CD8-positive, alpha-beta memory T cell (primary cell): ENCODE measurements at regions of chr1 and their contacts with region 1.

Region 1: GRCh38 chr1:43073490-43074230 is 98.4 kb downstream of the EBNA1BP2 start:
- DNase-seq: peak; percentile 52 to 81 (median 64)
- H3K4me3 ChIP-seq: no peak overlapping the region
- H3K4me3 Mint-ChIP-seq: no peak overlapping the region
- H3K27ac ChIP-seq: no peak overlapping the region
- H3K27ac Mint-ChIP-seq: peak overlapping the region in 2 of 8 donors; percentile 15 to 54
- H3K4me1 ChIP-seq: no peaks in the 10 kb centered on the region
- H3K4me1 Mint-ChIP-seq: peaks cover 5 to 11% (median 5%) of the 10 kb centered on the region in 3 donors
- H3K27me3 ChIP-seq: no peaks in the 10 kb centered on the region
- H3K27me3 Mint-ChIP-seq: no peaks in the 10 kb centered on the region

Region 2: GRCh38 chr1:42777852-42778251 is 295.8 kb before region 1 on chr1:
- CTCF ChIA-PET with region 1: interaction called, 35 read pairs
- POLR2A ChIA-PET with region 1: no interaction called
- DNase-seq: peak in 1 of 5 donors; percentile 15
- H3K4me3 ChIP-seq: no peak overlapping the region
- H3K4me3 Mint-ChIP-seq: no peak overlapping the region
- H3K27ac ChIP-seq: no peak overlapping the region
- H3K27ac Mint-ChIP-seq: peak overlapping the region in 5 of 8 donors; percentile 50 to 77 (median 77)
- H3K4me1 ChIP-seq: no peaks in the 10 kb centered on the region
- H3K4me1 Mint-ChIP-seq: peaks cover 13 to 26% (median 20%) of the 10 kb centered on the region in 3 donors
- H3K27me3 ChIP-seq: no peaks in the 10 kb centered on the region
- H3K27me3 Mint-ChIP-seq: peaks cover 0 to 1% of the 10 kb centered on the region in 2 donors

Region 3: DNA sequence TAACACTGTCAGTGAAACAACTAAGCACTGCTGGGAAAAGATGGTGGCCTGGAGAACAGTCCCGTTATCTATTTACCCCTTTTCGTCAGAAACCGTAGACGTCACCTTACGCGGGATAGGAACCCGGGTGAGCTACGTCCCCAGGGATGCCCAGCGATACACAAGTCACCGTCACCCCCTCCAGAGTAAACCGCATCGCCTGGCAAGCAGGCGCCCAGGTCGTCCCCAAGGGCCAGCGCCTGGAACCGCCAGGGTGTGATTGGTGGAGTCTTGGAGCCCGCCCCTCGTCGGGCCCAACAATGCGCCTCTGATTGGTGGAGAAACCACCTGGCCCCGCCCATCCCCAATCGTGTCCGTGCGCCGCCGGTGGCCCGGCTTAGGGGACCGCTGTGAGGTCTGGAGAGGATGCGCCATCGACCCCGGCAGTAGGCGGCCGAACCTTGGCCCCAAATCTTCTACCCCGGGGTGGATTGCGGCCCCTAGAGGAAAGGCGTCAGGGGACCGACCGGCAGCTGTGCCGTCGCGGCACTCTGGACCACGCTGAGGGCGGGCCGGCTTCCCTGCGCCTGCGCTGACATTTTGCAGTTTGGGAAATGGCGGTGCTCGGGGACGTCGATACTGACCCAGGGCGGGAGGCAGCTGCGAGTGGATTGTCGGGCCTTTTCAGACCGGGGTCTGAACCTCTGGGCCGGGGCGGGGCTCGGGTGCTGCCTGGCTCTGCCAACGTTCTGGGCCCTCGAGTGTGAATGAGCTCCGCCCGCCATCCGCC is 149.4 kb before region 1 on chr1:
- CTCF ChIA-PET with region 1: interaction called, 141 read pairs
- POLR2A ChIA-PET with region 1: interaction called, 13 read pairs
- DNase-seq: peak; percentile 87 to 94 (median 92)
- H3K4me3 ChIP-seq: peak overlapping the region; percentile 96
- H3K4me3 Mint-ChIP-seq: peak overlapping the region; percentile 83 to 95 (median 89)
- H3K27ac ChIP-seq: peak overlapping the region; percentile 81
- H3K27ac Mint-ChIP-seq: peak overlapping the region; percentile 79 to 98 (median 94)
- H3K4me1 ChIP-seq: peaks cover 22% of the 10 kb centered on the region
- H3K4me1 Mint-ChIP-seq: peaks cover 34 to 39% (median 36%) of the 10 kb centered on the region in 3 donors
- H3K27me3 ChIP-seq: no peaks in the 10 kb centered on the region
- H3K27me3 Mint-ChIP-seq: no peaks in the 10 kb centered on the region

Region 4: DNA sequence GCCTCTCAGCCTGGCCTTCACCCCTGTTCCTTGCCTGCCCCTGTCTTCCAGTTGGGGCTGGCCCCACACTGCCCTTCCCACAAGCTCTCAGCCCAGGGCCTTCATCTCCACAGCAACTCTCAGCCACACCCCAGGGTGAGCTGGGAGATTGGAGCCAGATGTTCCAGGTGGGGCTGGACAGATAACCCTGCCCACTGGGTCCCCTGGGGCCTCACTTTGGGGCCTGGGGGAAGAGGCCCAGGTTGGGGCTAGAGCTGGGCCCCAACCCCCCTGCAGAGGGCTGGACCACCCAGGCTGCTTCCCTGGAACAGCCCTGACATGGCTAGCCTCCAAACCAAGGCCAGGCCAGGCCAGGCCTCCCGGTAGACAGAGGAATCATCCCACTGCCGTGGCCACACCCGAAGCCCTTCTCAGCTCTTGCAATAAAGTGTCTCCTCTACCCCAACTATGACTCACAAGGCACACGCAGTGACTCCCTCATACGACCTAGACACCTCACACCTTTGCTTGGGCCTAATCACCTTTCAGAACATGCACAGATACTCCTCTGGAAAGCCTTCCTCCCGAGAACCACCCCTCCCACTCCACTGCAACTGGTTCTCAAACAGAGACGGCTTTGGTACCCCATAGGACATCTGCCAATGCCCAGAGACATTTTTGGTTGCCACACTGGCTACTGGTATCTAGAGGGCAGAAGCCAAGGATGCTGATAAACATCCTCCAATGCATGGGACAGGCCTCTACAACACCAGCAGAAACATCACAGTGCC is 137.2 kb before region 1 on chr1:
- CTCF ChIA-PET with region 1: interaction called, 19 read pairs
- POLR2A ChIA-PET with region 1: interaction called, 3 read pairs
- DNase-seq: peak in 4 of 5 donors; percentile 38 to 73 (median 48)
- H3K4me3 ChIP-seq: no peak overlapping the region
- H3K4me3 Mint-ChIP-seq: peak overlapping the region; percentile 34 to 65 (median 52)
- H3K27ac ChIP-seq: peak overlapping the region; percentile 62
- H3K27ac Mint-ChIP-seq: peak overlapping the region; percentile 81 to 96 (median 92)
- H3K4me1 ChIP-seq: peaks cover 96% of the 10 kb centered on the region
- H3K4me1 Mint-ChIP-seq: peaks cover 94 to 99% (median 99%) of the 10 kb centered on the region in 3 donors
- H3K27me3 ChIP-seq: no peaks in the 10 kb centered on the region
- H3K27me3 Mint-ChIP-seq: peaks cover 0 to 3% of the 10 kb centered on the region in 2 donors

Region 5: DNA sequence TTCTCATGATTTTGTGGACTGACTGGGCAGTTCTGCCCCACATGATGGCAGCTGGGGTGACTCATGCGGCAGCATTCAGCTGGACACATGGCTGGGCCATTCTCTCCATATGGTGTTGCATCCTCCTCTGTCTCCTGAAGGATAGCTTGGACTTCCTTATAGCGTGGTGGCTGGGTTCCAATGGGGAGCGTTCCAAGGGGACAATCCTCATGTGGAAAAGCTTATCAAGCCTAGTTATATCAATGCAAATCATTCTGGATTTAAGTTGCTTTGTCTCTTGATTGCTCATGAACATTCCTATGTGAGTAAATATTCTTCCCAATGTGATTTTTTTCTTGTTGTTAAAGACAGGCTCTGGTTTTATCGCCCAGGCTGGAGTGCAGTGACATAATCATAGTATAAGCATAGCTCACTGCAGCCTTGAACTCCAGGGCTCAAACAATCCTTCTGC is 101.8 kb before region 1 on chr1:
- CTCF ChIA-PET with region 1: interaction called, 10 read pairs
- POLR2A ChIA-PET with region 1: no interaction called
- DNase-seq: no peak
- H3K4me3 ChIP-seq: no peak overlapping the region
- H3K4me3 Mint-ChIP-seq: no peak overlapping the region
- H3K27ac ChIP-seq: no peak overlapping the region
- H3K27ac Mint-ChIP-seq: no peak overlapping the region
- H3K4me1 ChIP-seq: no peaks in the 10 kb centered on the region
- H3K4me1 Mint-ChIP-seq: no peaks in the 10 kb centered on the region
- H3K27me3 ChIP-seq: no peaks in the 10 kb centered on the region
- H3K27me3 Mint-ChIP-seq: no peaks in the 10 kb centered on the region

Region 6: GRCh38 chr1:43048601-43049011 is 25.1 kb before region 1 on chr1:
- CTCF ChIA-PET with region 1: interaction called, 11 read pairs
- POLR2A ChIA-PET with region 1: no interaction called
- DNase-seq: no peak
- H3K4me3 ChIP-seq: no peak overlapping the region
- H3K4me3 Mint-ChIP-seq: no peak overlapping the region
- H3K27ac ChIP-seq: no peak overlapping the region
- H3K27ac Mint-ChIP-seq: no peak overlapping the region
- H3K4me1 ChIP-seq: peaks cover 4% of the 10 kb centered on the region
- H3K4me1 Mint-ChIP-seq: no peaks in the 10 kb centered on the region
- H3K27me3 ChIP-seq: no peaks in the 10 kb centered on the region
- H3K27me3 Mint-ChIP-seq: no peaks in the 10 kb centered on the region